Activated CD4-positive, alpha-beta T cell treated with anti-CD3 and anti-CD28 coated beads, Interleukin-2, amount 10 ng/mL, durations not matched to agents 24 days and 14 days (primary cell): ENCODE measurements at regions of chr6 and their contacts with region 1.

Region 1: GRCh38 chr6:144349690-144350527 is 64.8 kb downstream of the UTRN start:
- DNase-seq: peak; percentile 78
- H3K4me3 Mint-ChIP-seq: peak overlapping the region; percentile 80
- H3K27ac Mint-ChIP-seq: peak overlapping the region; percentile 92
- H3K4me1 Mint-ChIP-seq: peaks cover 74% of the 10 kb centered on the region
- H3K27me3 Mint-ChIP-seq: no peaks in the 10 kb centered on the region

Region 2: GRCh38 chr6:144334131-144334708 is 15.7 kb before region 1 on chr6:
- intact Hi-C with region 1: loop called (anchors 2 kb)
- DNase-seq: peak; percentile 85
- H3K4me3 Mint-ChIP-seq: peak overlapping the region; percentile 79
- H3K27ac Mint-ChIP-seq: peak overlapping the region; percentile 82
- H3K4me1 Mint-ChIP-seq: peaks cover 43% of the 10 kb centered on the region
- H3K27me3 Mint-ChIP-seq: no peaks in the 10 kb centered on the region

Region 3: GRCh38 chr6:144469144-144469575 is 119.3 kb after region 1 on chr6:
- intact Hi-C with region 1: loop called (anchors 2 kb)
- DNase-seq: no peak
- H3K4me3 Mint-ChIP-seq: peak overlapping the region; percentile 74
- H3K27ac Mint-ChIP-seq: peak overlapping the region; percentile 90
- H3K4me1 Mint-ChIP-seq: peaks cover 22% of the 10 kb centered on the region
- H3K27me3 Mint-ChIP-seq: no peaks in the 10 kb centered on the region

Region 4: DNA sequence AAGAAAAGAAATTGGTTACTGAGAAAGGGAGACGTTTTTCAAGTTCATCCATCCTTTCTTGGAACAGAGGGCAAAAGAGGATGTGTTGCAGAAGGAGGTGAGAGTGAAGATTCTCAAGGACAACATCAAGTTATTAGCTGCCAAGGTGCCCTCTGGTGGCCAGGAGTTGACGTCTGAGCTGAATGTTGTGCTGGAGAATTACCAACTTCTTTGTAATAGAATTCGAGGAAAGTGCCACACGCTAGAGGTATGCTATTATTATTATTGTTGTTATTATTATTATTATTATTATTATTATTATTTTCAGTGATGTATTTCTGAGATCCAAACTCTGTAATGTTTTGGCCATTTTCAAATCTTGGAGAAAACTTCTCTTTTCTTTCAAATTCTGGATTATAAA is 132.2 kb after region 1 on chr6:
- intact Hi-C with region 1: loop called (anchors 5 kb)
- DNase-seq: peak; percentile 89
- H3K4me3 Mint-ChIP-seq: no peak overlapping the region
- H3K27ac Mint-ChIP-seq: no peak overlapping the region
- H3K4me1 Mint-ChIP-seq: peaks cover 9% of the 10 kb centered on the region
- H3K27me3 Mint-ChIP-seq: no peaks in the 10 kb centered on the region

Region 5: DNA sequence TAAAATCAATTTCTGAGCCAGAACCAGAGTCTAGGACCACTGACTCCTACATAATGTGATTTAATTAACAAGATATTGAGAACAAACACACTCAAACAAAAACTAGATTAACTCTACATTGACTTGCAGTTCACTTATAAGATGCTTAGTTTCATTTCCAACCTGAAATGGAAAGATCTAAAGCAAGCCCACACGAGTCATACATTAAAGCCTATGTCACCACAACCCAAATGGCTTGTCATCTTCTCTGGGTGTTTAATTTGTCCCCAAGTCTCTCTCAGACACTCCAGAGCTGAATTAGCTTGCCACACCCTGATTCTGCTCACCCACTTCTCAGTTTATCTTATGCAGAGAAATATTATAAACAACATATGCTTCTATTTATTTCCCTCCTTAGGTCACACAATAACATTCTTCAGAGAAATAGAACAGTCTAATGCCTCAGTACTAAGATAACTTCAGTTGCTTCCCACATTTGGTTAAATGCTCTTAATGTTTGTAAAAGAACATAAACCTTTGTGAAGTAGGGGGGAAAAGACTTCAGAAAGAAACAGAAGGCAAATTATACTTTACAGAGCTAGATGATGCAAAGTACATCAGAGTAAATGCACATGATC is 1473.5 kb after region 1 on chr6:
- intact Hi-C with region 1: loop called (anchors 5 kb)
- DNase-seq: no peak
- H3K4me3 Mint-ChIP-seq: no peak overlapping the region
- H3K27ac Mint-ChIP-seq: no peak overlapping the region
- H3K4me1 Mint-ChIP-seq: peaks cover 35% of the 10 kb centered on the region
- H3K27me3 Mint-ChIP-seq: peaks cover 3% of the 10 kb centered on the region